ENCODE measurements at regions of chr6 and their contacts with region 1.

Region 1: DNA sequence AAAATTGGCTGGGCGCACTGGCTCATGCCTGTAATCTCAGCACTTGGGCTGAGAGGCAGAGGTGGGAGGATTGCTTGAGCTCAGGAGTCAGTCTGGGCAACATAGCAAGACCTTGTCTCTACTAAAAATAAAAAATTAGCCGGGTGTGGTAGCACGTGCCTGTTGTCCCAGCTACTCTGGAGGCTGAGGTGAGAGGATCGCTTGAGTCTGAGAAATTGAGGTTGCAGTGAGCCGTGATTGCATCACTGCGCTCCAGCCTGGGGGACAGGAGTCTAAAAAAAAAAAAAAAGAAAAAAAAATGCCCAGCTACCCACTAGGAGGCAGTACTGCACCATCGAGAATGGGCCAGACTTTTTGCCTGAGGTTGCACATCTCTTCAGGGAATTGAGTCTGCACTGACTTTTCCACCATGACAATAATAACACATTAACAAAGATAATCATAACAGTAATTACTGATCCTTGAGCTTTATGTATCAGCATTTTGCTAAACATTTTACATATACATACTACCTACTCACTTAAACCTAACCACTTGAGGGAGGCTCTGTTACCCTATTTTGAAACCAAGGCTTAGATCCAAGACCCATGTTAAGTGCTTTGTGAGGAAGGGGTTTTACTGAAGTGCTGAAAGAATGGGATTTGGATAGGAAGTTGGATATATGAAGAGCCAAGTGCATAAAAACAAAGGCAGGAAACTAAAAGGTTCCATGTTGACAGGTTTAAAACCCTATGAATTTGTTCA is 21.0 kb downstream of the SRSF3 start:
- DNase-seq: no peak
- ATAC-seq: peak; percentile 66
- H3K4me3 ChIP-seq: no peak overlapping the region
- H3K27ac ChIP-seq: no peak overlapping the region
- H3K4me1 ChIP-seq: peaks cover 0 to 46% of the 10 kb centered on the region in 2 donors
- H3K27me3 ChIP-seq: no peaks in the 10 kb centered on the region
- CTCF ChIP-seq: peak; percentile 51 to 68

Region 2: DNA sequence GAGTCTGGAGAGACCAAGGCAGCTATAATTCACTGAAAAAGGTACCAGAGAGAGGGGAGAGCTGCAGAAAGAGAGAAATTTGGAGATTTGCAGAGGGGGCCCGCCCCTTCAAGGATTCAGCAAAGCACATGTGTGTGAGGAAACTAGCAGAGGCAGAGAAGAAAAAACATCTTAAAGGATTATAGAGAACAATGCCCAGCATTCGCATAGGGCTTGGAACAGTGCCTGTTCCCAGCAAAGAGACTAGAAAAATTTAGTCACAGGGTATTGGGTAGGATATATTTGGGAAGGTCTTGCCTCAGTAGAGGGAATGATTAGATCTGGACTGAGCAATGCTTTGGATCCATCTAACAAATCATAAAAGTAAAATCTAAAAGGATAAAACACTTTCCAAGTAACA is 738.3 kb before region 1 on chr6:
- intact Hi-C with region 1: no loop called
- DNase-seq: no peak
- ATAC-seq: no peak
- H3K4me3 ChIP-seq: no peak overlapping the region
- H3K27ac ChIP-seq: no peak overlapping the region
- H3K4me1 ChIP-seq: no peaks in the 10 kb centered on the region
- H3K27me3 ChIP-seq: no peaks in the 10 kb centered on the region
- CTCF ChIP-seq: no peak

Region 3: GRCh38 chr6:36682328-36683144 is 67.3 kb after region 1 on chr6:
- intact Hi-C with region 1: loop called in 1 of 2 experiments (anchors 5 kb)
- DNase-seq: peak in 3 of 4 donors; percentile 45 to 84 (median 83)
- ATAC-seq: peak; percentile 7
- H3K4me3 ChIP-seq: no peak overlapping the region
- H3K27ac ChIP-seq: peak overlapping the region; percentile 8 to 13
- H3K4me1 ChIP-seq: peaks cover 30 to 80% of the 10 kb centered on the region in 2 donors
- H3K27me3 ChIP-seq: peaks cover 0 to 23% of the 10 kb centered on the region in 2 donors
- CTCF ChIP-seq: no peak

Region 4: GRCh38 chr6:36759148-36759759 is 144.1 kb after region 1 on chr6:
- intact Hi-C with region 1: loop called in 1 of 2 experiments (anchors 10 kb)
- DNase-seq: peak; percentile 52 to 97 (median 82)
- ATAC-seq: peak; percentile 96
- H3K4me3 ChIP-seq: no peak overlapping the region
- H3K27ac ChIP-seq: no peak overlapping the region
- H3K4me1 ChIP-seq: peaks cover 0 to 43% of the 10 kb centered on the region in 2 donors
- H3K27me3 ChIP-seq: no peaks in the 10 kb centered on the region
- CTCF ChIP-seq: peak; percentile 97 to 98